HEK293 (cell line): ENCODE measurements at regions of chr19 and their contacts with region 1.

Region 1: GRCh38 chr19:43934985-43935708 is at the start of gene ZNF45:
- H3K4me3 ChIP-seq: peak within 1 kb of the TSS; percentile 74
- H3K27ac ChIP-seq: peak within 1 kb of the TSS; percentile 78
- H3K4me1 ChIP-seq: peaks cover 18% of the 10 kb centered on the region
- CTCF ChIP-seq: peak; percentile 58; the same call in 1 of the 2 replicates

Region 2: GRCh38 chr19:43826787-43827754 is 108.1 kb before region 1 on chr19 and contains the start of gene ZNF283:
- CTCF ChIA-PET with region 1: no interaction called
- POLR2A ChIA-PET with region 1: interaction called, 20 read pairs
- H3K4me3 ChIP-seq: peak within 1 kb of the TSS; percentile 67
- H3K27ac ChIP-seq: peak within 1 kb of the TSS; percentile 44; the same call in 1 of the 2 replicates
- H3K4me1 ChIP-seq: peaks cover 6% of the 10 kb centered on the region
- CTCF ChIP-seq: no peak

Region 3: GRCh38 chr19:43913383-43913782 is 21.8 kb before region 1 on chr19:
- CTCF ChIA-PET with region 1: interaction called, 3 read pairs
- POLR2A ChIA-PET with region 1: interaction called, 10 read pairs
- H3K4me3 ChIP-seq: no peak overlapping the region
- H3K27ac ChIP-seq: no peak overlapping the region
- H3K4me1 ChIP-seq: no peaks in the 10 kb centered on the region
- CTCF ChIP-seq: no peak

Region 4: DNA sequence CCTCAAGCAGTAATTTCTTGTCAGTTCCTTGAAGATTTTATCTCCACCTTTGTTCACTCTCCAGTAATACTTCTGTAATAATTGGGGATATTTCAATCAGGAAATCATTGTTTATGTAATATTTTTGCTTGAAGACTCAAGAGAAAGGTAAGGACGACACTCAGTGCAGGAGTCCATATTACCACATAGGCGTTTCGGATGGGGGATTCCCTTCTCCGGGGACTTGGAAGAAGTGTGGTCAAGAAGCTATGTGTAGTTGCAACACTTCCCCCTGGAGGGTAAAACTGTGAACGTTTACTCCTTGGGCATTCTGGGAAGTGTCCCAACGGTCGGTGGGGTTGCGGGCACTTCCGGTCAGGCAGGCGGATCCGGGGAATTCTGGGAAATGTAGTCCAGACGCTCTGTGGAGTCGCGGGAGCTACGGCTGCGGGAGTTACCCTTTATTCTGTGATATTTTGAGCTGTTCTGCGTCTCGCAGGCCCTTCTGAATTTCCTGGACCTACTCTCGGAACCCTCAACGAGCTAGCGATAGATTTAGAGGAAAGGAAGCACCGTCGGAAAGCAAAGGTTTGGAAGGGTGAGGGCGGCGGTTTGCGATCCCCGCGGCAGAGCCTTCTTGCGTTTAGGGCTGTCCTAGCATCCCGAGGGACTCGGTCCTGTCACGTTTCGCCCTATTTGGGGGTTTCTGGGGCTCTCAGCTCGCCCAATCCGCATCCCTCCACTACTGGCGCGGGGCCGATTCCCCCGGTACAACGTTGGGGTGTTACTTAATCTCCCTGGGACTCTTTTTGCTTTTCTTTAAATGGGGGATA is 15.9 kb after region 1 on chr19 and contains the start of gene ZNF221:
- CTCF ChIA-PET with region 1: interaction called, 19 read pairs
- POLR2A ChIA-PET with region 1: interaction called, 114 read pairs
- H3K4me3 ChIP-seq: peak within 1 kb of the TSS; percentile 57
- H3K27ac ChIP-seq: peak within 1 kb of the TSS; percentile 82
- H3K4me1 ChIP-seq: no peaks in the 10 kb centered on the region
- CTCF ChIP-seq: peak; percentile 98

Region 5: DNA sequence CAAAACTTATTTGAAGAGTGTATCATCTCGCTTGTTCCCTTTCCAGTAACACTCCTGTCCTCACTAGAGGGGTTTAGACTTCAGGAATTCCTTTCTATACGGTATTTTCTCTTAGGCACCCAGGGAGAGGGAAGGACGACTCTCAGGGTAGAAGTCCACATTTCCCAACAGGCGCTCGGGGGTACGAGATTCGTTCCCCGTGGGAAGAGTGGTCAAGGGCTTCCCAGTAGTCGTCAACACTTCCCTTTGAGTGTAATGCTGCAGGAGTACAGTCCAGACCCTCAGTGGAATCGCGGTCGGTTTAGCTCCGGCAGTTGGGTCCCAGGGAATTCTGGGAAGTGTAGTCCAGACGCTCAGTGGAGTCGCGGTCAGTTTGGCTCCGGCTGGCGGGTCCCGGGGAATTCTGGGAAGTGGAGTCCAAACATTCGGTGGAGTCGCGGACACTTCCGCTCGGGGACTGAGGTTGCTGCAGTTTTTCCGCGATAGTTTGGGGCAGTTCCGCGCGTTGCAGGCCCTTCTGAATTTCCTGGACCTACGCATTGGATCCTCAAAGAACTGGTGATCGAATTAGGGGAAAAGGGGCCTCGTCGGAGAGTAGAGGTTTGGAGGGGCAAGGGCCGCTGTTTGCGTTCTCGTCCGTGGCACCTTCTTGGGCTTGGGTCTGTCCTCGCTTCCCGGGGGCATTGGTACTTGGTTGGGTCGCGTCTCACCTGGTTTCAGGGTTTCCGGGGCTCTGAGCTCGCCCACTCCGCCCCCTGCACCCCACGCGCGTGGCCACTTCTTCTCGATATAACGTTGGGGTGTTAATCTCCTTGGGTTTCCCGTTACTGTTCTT is 159.0 kb after region 1 on chr19 and contains the start of gene ZNF224:
- CTCF ChIA-PET with region 1: no interaction called
- POLR2A ChIA-PET with region 1: interaction called, 12 read pairs
- H3K4me3 ChIP-seq: peak within 1 kb of the TSS; percentile 61
- H3K27ac ChIP-seq: peak within 1 kb of the TSS; percentile 92
- H3K4me1 ChIP-seq: peaks cover 19% of the 10 kb centered on the region; the same call in 1 of the 2 replicates
- CTCF ChIP-seq: no peak; the same call in 1 of the 2 replicates